T-cell (primary cell): ENCODE measurements at regions of chr2 and their contacts with region 1.

Region 1: GRCh38 chr2:102240640-102241370 is 54.0 kb downstream of the IL1RL2 start:
- DNase-seq: peak; percentile 55 to 93 (median 78)
- ATAC-seq: peak; percentile 89 to 97 (median 95)
- H3K4me3 ChIP-seq: no peak overlapping the region
- H3K4me3 Mint-ChIP-seq: peak overlapping the region in 1 of 3 donors; percentile 21
- H3K27ac ChIP-seq: no peak overlapping the region
- H3K27ac Mint-ChIP-seq: peak overlapping the region; percentile 78 to 83
- H3K4me1 ChIP-seq: peaks cover 0 to 10% of the 10 kb centered on the region in 2 experiments
- H3K4me1 Mint-ChIP-seq: peaks cover 8 to 30% (median 23%) of the 10 kb centered on the region in 3 donors
- H3K27me3 ChIP-seq: no peaks in the 10 kb centered on the region
- H3K27me3 Mint-ChIP-seq: peaks cover 3% of the 10 kb centered on the region in 2 donors

Region 2: DNA sequence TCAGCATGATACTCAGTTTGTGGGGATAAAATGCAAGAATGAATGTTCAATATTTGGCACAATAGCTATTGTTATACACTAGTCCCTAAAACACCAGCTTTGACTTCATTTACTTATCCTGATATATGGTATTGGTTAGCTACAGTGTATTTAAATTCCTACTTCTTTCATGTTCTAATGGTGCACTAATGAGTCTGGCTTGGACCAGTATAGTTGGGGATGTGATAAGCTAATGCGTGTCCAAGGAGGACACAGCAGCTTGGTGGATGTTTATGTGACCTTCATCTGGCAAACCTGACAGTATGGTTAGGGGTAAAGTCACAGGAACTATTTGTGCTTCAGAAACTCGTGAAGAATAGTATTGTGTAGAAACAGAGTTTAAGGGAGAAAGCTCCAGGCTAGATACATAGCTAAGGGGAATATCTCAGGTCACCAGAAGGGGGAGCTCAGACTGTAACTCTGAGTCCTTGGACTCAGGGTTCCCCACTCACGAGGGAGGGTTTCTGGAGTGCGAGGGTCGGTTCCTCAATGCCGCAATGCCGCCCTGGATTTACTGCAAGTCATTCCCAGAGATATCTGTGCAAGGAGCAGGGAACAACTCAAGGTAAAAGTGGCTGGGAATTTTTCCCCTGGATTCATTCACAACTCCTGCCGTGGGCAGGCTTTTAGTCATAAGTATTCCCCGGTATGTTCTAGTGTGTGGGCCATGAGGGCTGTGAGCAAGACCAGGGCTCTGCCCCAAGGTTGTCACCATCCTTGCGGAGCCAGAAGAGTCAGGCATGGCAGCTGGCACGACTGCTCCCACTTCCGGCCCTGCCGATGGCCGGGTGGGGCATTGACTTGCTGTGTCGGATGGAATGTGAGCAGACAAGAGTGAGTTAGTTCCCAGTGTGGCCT is 234.6 kb before region 1 on chr2:
- CTCF ChIA-PET with region 1: interaction called, 6 to 18 read pairs
- POLR2A ChIA-PET with region 1: no interaction called
- DNase-seq: peak in 12 of 35 experiments; percentile 8 to 63 (median 23)
- ATAC-seq: peak in 3 of 4 experiments; percentile 47 to 63 (median 52)
- H3K4me3 ChIP-seq: no peak overlapping the region
- H3K4me3 Mint-ChIP-seq: no peak overlapping the region
- H3K27ac ChIP-seq: no peak overlapping the region
- H3K27ac Mint-ChIP-seq: no peak overlapping the region
- H3K4me1 ChIP-seq: peaks cover 4 to 18% of the 10 kb centered on the region in 2 experiments
- H3K4me1 Mint-ChIP-seq: peaks cover 1 to 13% (median 4%) of the 10 kb centered on the region in 3 donors
- H3K27me3 ChIP-seq: peaks cover 0 to 6% of the 10 kb centered on the region in 2 experiments
- H3K27me3 Mint-ChIP-seq: peaks cover 0 to 5% of the 10 kb centered on the region in 2 donors

Region 3: GRCh38 chr2:102027036-102027980 is 213.5 kb before region 1 on chr2:
- CTCF ChIA-PET with region 1: interaction called, 12 to 13 read pairs
- POLR2A ChIA-PET with region 1: no interaction called
- DNase-seq: no peak
- ATAC-seq: no peak
- H3K4me3 ChIP-seq: no peak overlapping the region
- H3K4me3 Mint-ChIP-seq: no peak overlapping the region
- H3K27ac ChIP-seq: no peak overlapping the region
- H3K27ac Mint-ChIP-seq: no peak overlapping the region
- H3K4me1 ChIP-seq: no peaks in the 10 kb centered on the region
- H3K4me1 Mint-ChIP-seq: peaks cover 2 to 10% (median 4%) of the 10 kb centered on the region in 3 donors
- H3K27me3 ChIP-seq: no peaks in the 10 kb centered on the region
- H3K27me3 Mint-ChIP-seq: no peaks in the 10 kb centered on the region

Region 4: GRCh38 chr2:102172745-102173144 is 68.1 kb before region 1 on chr2:
- CTCF ChIA-PET with region 1: no interaction called
- POLR2A ChIA-PET with region 1: no interaction called
- DNase-seq: no peak
- ATAC-seq: no peak
- H3K4me3 ChIP-seq: no peak overlapping the region
- H3K4me3 Mint-ChIP-seq: no peak overlapping the region
- H3K27ac ChIP-seq: no peak overlapping the region
- H3K27ac Mint-ChIP-seq: peak overlapping the region in 1 of 2 donors; percentile 79
- H3K4me1 ChIP-seq: peaks cover 0 to 3% of the 10 kb centered on the region in 2 experiments
- H3K4me1 Mint-ChIP-seq: peaks cover 8 to 10% (median 9%) of the 10 kb centered on the region in 3 donors
- H3K27me3 ChIP-seq: no peaks in the 10 kb centered on the region
- H3K27me3 Mint-ChIP-seq: peaks cover 2 to 4% of the 10 kb centered on the region in 2 donors

Region 5: DNA sequence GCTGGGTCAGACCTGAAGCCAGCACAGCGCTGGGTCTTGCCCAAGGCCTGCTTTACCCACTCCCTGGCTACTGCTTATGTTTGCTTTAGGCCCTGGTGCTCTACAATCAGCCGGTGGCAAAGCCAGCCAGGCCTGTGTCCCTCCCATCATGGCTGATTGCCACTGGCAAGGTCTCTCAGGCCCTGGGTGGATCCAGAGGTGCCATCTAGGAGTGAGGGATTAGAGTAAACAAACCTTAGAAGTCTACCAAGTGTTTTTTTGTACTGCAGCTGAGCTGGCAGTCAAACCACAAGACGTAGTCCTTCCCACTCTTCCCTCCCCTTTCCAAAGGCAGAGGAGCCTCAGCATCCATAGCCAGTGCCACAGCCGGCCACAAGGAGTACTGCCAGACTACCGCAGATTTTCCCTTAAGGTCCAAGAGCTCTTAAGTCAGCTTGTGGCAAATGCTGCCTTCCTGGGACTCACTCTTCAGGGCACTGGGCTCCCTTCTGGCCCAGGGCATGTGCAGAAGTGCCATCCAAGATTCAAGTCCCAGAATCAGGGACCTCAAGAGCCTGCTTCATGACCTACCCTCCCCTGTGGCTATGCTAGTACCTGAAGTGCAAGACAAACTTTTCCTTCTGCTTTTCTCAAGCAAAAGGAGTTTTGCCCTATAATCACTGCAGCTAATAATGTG is 34.0 kb before region 1 on chr2:
- CTCF ChIA-PET with region 1: interaction called in 1 of 2 experiments, 3 read pairs
- POLR2A ChIA-PET with region 1: interaction called in 1 of 2 experiments, 12 read pairs
- DNase-seq: no peak
- ATAC-seq: no peak
- H3K4me3 ChIP-seq: no peak overlapping the region
- H3K4me3 Mint-ChIP-seq: no peak overlapping the region
- H3K27ac ChIP-seq: no peak overlapping the region
- H3K27ac Mint-ChIP-seq: no peak overlapping the region
- H3K4me1 ChIP-seq: no peaks in the 10 kb centered on the region
- H3K4me1 Mint-ChIP-seq: no peaks in the 10 kb centered on the region
- H3K27me3 ChIP-seq: peaks cover 0 to 12% of the 10 kb centered on the region in 2 experiments
- H3K27me3 Mint-ChIP-seq: no peaks in the 10 kb centered on the region

Region 6: GRCh38 chr2:102256276-102256675 is 15.5 kb after region 1 on chr2:
- CTCF ChIA-PET with region 1: interaction called, 6 to 17 read pairs
- POLR2A ChIA-PET with region 1: no interaction called
- DNase-seq: peak in 1 of 35 experiments; percentile 50
- ATAC-seq: no peak
- H3K4me3 ChIP-seq: no peak overlapping the region
- H3K4me3 Mint-ChIP-seq: peak overlapping the region; percentile 18 to 74 (median 60)
- H3K27ac ChIP-seq: no peak overlapping the region
- H3K27ac Mint-ChIP-seq: peak overlapping the region in 1 of 2 donors; percentile 11
- H3K4me1 ChIP-seq: peaks cover 4 to 26% of the 10 kb centered on the region in 2 experiments
- H3K4me1 Mint-ChIP-seq: peaks cover 28 to 62% (median 54%) of the 10 kb centered on the region in 3 donors
- H3K27me3 ChIP-seq: peaks cover 0 to 1% of the 10 kb centered on the region in 2 experiments
- H3K27me3 Mint-ChIP-seq: peaks cover 0 to under 1% of the 10 kb centered on the region in 2 donors